Dendritic cell treated with granulocyte-macrophage colony-stimulating factor and Interleukin-4, amounts not matched to agents 40 ng/mL and 50 ng/mL, for 4 days (primary cell): ENCODE measurements at regions of chr2 and their contacts with region 1.

Region 1: GRCh38 chr2:219543601-219544358 is at the starts of genes CHPF and TMEM198:
- H3K4me3 Mint-ChIP-seq: peak within 1 kb of the TSS; percentile 76
- H3K27ac Mint-ChIP-seq: peak within 1 kb of the TSS; percentile 39
- H3K4me1 Mint-ChIP-seq: peaks cover 9% of the 10 kb centered on the region
- H3K27me3 Mint-ChIP-seq: peaks cover 79% of the 10 kb centered on the region

Region 2: DNA sequence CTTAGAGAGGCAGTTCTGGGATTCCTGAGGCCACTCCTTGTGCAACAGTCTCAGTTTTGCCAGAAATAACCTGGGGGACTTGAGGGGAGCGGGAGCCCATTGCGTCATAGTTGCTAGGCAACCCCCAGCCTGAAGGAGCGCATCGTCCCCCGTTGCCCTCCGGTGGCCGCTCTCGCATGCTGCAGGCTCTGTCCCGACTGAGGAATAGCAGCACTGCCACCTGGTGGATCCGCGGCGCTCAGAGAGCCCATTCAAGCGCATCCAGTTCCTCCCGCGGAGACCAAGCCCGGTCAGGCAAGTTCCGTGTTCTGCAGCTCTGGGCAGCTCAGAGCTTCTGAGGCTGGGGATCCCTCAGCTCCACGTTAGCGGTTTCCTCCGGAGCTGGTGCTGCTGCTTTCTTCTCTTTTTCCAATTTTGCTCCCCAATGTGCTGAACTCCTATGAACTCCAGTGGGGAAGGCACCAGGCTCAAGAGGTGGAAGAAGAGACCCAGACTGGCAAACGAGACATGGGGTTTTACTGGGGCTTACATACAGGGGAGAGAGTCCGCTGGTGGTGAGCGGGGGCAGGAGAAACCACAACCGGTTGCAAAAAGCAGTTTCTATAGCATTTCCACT is 98.8 kb after region 1 on chr2:
- intact Hi-C with region 1: loop called (anchors 1 kb)
- H3K4me3 Mint-ChIP-seq: no peak overlapping the region
- H3K27ac Mint-ChIP-seq: no peak overlapping the region
- H3K4me1 Mint-ChIP-seq: peaks cover 29% of the 10 kb centered on the region
- H3K27me3 Mint-ChIP-seq: peaks cover 26% of the 10 kb centered on the region

Region 3: GRCh38 chr2:219689676-219690628 is 146.2 kb after region 1 on chr2:
- intact Hi-C with region 1: loop called (anchors 1 kb)
- H3K4me3 Mint-ChIP-seq: no peak overlapping the region
- H3K27ac Mint-ChIP-seq: no peak overlapping the region
- H3K4me1 Mint-ChIP-seq: peaks cover 6% of the 10 kb centered on the region
- H3K27me3 Mint-ChIP-seq: peaks cover 43% of the 10 kb centered on the region